GM12878 (cell line): ENCODE measurements at regions of chr15 and their contacts with region 1.

Region 1: DNA sequence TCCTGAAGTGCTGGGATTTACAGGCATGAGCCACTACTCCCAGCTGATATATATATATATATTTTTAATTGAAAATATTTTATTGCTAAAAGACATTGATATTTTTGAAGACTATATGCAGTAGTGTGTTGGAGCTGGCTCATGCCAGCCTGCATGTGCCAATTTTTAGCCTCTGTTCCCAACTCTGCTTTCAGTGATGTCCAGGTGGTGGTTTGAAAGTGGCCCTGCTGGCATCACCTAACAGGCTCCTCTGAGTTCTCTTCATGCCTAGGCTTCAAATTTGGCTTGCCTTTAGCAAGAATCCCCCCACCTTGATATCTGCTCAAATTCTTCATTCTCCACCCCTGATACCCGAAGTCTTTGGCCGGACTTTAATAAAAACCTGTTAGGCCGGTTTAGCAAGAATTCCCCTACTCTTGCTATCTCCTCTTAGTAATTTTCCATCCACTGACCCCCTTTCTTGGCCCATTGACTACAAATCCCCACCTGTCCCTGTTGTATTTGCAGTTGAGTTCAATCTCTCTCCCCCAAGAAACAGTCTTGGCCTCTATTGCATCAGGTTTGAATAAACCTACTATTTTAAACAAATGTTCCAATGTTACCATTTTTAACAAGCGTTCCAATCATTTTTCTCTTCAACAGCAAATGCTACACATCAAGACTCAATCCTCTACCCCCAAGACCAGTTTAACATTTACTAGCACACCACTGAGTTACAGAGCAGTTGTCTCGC is 23.9 kb upstream of the CTSH start:
- DNase-seq: no peak
- ATAC-seq: no peak
- H3K4me3 ChIP-seq: no peak overlapping the region
- H3K27ac ChIP-seq: no peak overlapping the region
- H3K4me1 ChIP-seq: no peaks in the 10 kb centered on the region
- H3K27me3 ChIP-seq: no peaks in the 10 kb centered on the region
- CTCF ChIP-seq: no peak
- EP300 ChIP-seq: no peak
- POLR2A ChIP-seq: no peak
- RAD21 ChIP-seq: no peak

Region 2: GRCh38 chr15:78944669-78945407 is 23.9 kb before region 1 on chr15 and contains the start of gene CTSH:
- CTCF ChIA-PET with region 1: no interaction called
- POLR2A ChIA-PET with region 1: interaction called, 10 read pairs
- RAD21 ChIA-PET with region 1: no interaction called
- SMC1A ChIA-PET with region 1: interaction called, 3 read pairs
- in situ Hi-C with region 1: no loop called
- intact Hi-C with region 1: no loop called
- DNase-seq: no peak
- ATAC-seq: peak; percentile 84
- H3K4me3 ChIP-seq: peak within 1 kb of the TSS; percentile 96
- H3K27ac ChIP-seq: peak within 1 kb of the TSS; percentile 96
- H3K4me1 ChIP-seq: peaks cover 4% of the 10 kb centered on the region; the same call in 1 of the 2 replicates
- H3K27me3 ChIP-seq: no peaks in the 10 kb centered on the region; a peak in 1 of 4 replicates
- CTCF ChIP-seq: no peak
- EP300 ChIP-seq: no peak
- POLR2A ChIP-seq: peak; percentile 91
- RAD21 ChIP-seq: 0 out of 2 replicates have a peak, but pooled peaks have one; percentile 9
- polyA plus RNA-seq, gene CTSH: 30.2 to 88.2 TPM